HEK293 (cell line): ENCODE measurements at regions of chr22 and their contacts with region 1.

Region 1: DNA sequence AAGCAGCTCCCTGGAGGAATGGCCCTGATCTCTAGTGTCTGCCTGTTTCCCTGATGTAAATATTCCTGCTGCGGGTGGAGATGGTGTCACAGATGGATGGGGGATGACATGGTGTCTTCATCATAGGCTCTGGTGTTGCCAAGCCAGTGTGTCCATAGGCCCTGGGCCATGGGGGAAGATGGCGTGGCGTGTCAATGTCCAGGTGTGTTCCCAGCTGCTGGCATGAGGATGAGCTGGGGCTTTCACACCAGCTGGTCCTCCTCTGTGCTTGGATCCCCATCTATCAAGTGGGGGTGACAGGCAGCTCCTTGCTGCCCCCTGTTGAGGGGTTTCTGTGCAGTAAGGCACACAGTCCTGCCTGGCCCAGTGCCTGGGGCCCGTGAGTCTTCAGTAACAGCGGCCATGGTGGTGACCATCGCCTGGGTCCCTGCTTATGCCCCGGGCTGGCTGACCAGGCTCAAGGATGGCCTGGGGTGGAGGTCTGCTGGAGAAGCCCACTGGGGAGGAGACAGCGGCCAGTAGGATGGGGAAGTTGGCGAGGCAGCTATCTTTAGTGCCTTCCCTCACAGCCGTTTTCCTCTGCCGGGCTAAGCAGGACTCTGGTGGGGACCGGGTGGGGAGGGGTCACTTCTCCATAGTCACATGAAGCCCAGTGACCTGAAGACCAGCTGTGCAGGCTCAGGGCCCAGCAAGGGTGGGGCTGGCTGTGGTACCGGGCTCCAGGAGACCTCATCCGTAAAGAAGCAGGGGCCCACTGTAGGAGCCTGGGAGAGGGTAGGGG is 12.7 kb downstream of the RPL3 start:
- H3K4me3 ChIP-seq: no peak overlapping the region
- H3K27ac ChIP-seq: no peak overlapping the region
- H3K4me1 ChIP-seq: no peaks in the 10 kb centered on the region
- CTCF ChIP-seq: no peak

Region 2: GRCh38 chr22:39135090-39135896 is 171.5 kb before region 1 on chr22:
- CTCF ChIA-PET with region 1: interaction called, 10 read pairs
- POLR2A ChIA-PET with region 1: interaction called, 4 read pairs
- H3K4me3 ChIP-seq: no peak overlapping the region
- H3K27ac ChIP-seq: no peak overlapping the region
- H3K4me1 ChIP-seq: no peaks in the 10 kb centered on the region
- CTCF ChIP-seq: peak; percentile 51

Region 3: GRCh38 chr22:39170825-39171622 is 135.7 kb before region 1 on chr22:
- CTCF ChIA-PET with region 1: interaction called, 48 read pairs
- POLR2A ChIA-PET with region 1: interaction called, 93 read pairs
- H3K4me3 ChIP-seq: no peak overlapping the region
- H3K27ac ChIP-seq: no peak overlapping the region
- H3K4me1 ChIP-seq: peaks cover 10% of the 10 kb centered on the region
- CTCF ChIP-seq: peak; percentile 89

Region 4: DNA sequence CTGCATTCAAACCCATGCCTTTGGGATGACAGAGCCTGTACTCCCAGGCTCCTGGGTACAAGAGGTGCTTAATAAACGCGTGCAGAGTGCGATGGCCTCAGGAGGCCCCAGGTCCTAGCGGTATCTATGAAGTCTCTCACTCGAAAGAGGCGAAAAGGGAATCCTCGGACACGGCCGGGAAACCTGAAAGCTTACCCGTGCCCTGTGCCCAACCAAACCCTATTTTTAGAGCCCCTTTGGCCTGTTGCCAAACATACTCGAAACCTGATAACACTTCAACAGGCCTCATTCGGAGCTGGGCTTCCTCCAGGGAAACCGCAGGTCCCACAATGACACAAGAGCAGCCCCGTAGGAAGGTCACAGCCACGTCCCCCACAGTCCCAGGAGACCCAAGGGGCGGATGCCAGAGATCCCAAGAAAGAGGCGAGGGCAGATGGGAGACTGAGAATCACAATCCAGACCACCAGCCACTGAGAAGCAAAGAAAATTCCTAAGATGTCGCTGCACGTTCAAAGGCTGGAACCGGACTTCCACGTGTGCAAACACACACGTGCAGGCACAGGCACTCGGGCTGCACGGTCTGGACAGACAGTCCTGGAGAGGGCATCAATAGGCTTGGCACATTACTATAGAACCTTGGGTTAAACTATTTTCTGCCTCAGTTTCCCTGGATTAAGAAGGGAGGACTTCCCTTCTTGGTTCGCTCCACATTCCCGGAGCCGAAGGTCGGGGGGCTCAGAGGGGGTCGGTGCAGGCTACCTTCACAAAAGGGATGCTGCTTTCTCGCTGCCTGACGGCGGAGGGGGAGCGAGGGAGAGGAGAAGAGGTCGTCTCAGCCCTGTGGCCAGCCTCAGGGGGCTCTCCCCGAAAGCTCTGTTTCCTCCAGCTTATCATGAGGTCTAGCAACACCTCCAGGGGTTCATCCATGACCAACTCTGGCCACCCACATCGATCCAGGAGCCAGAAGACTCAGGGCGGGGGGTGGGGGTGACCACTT is 70.2 kb before region 1 on chr22:
- CTCF ChIA-PET with region 1: interaction called, 6 read pairs
- POLR2A ChIA-PET with region 1: interaction called, 16 read pairs
- H3K4me3 ChIP-seq: no peak overlapping the region
- H3K27ac ChIP-seq: peak overlapping the region; percentile 42; the same call in 1 of the 2 replicates
- H3K4me1 ChIP-seq: peaks cover 27% of the 10 kb centered on the region
- CTCF ChIP-seq: no peak

Region 5: DNA sequence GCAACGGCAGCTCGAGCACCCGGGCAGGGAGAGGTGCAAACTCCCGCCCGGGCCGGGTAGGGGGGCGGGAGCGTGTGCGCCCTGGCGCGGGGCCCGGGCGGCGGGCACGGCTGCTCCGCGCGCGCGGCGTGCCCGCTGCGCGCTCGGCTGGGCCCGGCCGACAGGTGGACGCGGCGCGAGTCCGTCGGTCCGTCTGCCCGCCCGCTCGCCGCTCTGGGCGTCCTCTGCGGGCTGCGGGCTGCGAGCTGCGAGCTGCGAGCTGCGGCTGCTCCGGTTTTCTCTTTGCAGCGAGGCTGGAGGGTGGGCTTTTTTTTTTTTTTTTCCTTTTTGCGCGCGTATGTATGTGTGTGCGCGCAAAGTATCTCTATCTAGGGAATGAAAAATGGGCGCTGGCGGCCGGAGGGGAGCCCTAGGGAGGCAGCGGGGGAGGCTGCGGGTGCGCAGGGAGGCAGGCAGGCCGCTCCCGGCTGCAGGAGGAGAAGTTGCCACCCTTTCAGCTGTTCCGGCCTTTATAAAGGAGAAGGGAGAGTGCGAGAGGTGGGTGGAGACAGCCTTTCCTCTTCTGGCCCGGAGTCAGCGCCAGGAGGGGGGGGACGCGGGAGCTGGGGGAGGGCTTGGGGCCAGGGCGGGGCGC is 62.2 kb before region 1 on chr22 and contains the start of gene PDGFB:
- CTCF ChIA-PET with region 1: interaction called, 12 read pairs
- POLR2A ChIA-PET with region 1: interaction called, 22 read pairs
- H3K4me3 ChIP-seq: peak within 1 kb of the TSS; percentile 54
- H3K27ac ChIP-seq: peak within 1 kb of the TSS; percentile 17; the same call in 1 of the 2 replicates
- H3K4me1 ChIP-seq: peaks cover 17% of the 10 kb centered on the region
- CTCF ChIP-seq: no peak

Region 6: DNA sequence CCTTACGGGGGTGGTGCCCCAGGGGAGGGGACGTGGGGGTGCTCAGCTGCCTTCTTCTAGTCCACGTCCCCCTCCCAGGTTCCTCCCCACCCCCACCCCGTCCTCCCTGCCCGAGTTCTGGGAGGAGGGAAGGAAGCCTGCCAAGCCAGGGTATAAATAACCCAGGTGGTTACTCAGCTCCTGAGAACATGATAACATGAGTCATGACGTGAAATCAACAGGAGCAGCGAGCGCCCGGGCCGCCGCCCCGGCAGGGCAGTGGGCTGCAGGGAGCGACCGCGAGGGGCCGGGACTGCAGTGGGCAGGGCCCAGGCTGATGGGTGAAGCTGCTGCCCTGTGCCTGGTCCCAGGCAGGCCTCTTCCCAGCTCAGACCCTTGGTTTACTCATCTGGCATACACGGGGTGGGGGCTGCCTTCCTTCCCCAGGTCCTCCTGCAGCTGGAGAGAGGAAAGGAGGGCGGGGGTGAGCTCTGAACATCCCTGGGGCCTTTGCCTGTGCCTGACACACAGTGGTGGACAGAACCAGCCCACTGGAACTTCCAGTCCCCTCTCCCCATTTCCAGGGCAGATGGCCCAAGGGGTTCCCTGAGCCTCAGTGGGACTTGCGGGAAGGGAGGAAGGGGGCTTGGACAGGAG is 53.2 kb before region 1 on chr22:
- CTCF ChIA-PET with region 1: interaction called, 4 read pairs
- POLR2A ChIA-PET with region 1: interaction called, 14 read pairs
- H3K4me3 ChIP-seq: peak overlapping the region; percentile 14; the same call in 1 of the 2 replicates
- H3K27ac ChIP-seq: peak overlapping the region; percentile 12; the same call in 1 of the 2 replicates
- H3K4me1 ChIP-seq: peaks cover 11% of the 10 kb centered on the region
- CTCF ChIP-seq: no peak

Region 7: GRCh38 chr22:39332441-39333064 is 25.8 kb after region 1 on chr22:
- CTCF ChIA-PET with region 1: interaction called, 10 read pairs
- POLR2A ChIA-PET with region 1: interaction called, 10 read pairs
- H3K4me3 ChIP-seq: no peak overlapping the region
- H3K27ac ChIP-seq: no peak overlapping the region
- H3K4me1 ChIP-seq: 0 out of 2 replicates have a peak, but pooled peaks cover 2% of the 10 kb centered on the region
- CTCF ChIP-seq: no peak